ENCODE measurements at regions of chr10 and their contacts with region 1.

Region 1: DNA sequence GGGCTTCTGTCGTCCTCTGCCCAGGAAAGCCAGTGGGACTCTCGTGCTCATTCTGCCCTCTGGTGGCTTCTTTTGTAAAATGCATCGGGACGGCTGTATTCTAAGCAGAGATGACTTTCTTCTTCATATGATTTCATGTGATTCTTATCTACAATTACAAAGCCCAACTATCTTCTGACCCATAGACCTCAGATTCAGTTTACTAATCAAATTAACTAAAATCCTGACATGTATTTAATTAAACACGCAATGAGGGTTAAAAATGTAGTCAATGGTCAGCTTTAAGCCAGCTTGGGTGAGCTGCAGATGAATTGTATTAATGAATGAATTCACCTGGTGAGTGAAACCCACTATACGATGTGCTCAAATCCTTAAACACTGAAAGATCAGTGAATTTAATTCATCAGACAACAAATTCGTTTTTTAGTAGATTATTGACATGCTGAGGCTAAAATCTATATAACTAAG is 117.6 kb upstream of the FAM204A start:
- DNase-seq: peak; percentile 69
- ATAC-seq: peak; percentile 98
- H3K4me3 Mint-ChIP-seq: no peak overlapping the region
- H3K27ac Mint-ChIP-seq: no peak overlapping the region
- H3K4me1 Mint-ChIP-seq: 0 out of 2 replicates have a peak, but pooled peaks cover 2% of the 10 kb centered on the region
- H3K27me3 Mint-ChIP-seq: peaks cover 6% of the 10 kb centered on the region; the same call in 1 of the 2 replicates
- CTCF ChIP-seq: peak; percentile 50

Region 2: GRCh38 chr10:117496616-117497028 is 963.1 kb before region 1 on chr10:
- CTCF ChIA-PET with region 1: interaction called, 12 read pairs
- POLR2A ChIA-PET with region 1: no interaction called
- DNase-seq: peak; percentile 82
- ATAC-seq: peak; percentile 88
- H3K4me3 Mint-ChIP-seq: no peak overlapping the region
- H3K27ac Mint-ChIP-seq: no peak overlapping the region
- H3K4me1 Mint-ChIP-seq: peaks cover 2% of the 10 kb centered on the region; the same call in 1 of the 2 replicates
- H3K27me3 Mint-ChIP-seq: peaks cover 35% of the 10 kb centered on the region
- CTCF ChIP-seq: peak; percentile 88

Region 3: GRCh38 chr10:118259288-118259906 is 200.4 kb before region 1 on chr10:
- CTCF ChIA-PET with region 1: interaction called, 17 read pairs
- POLR2A ChIA-PET with region 1: no interaction called
- DNase-seq: peak; percentile 73
- ATAC-seq: peak; percentile 95
- H3K4me3 Mint-ChIP-seq: no peak overlapping the region
- H3K27ac Mint-ChIP-seq: no peak overlapping the region
- H3K4me1 Mint-ChIP-seq: peaks cover 18% of the 10 kb centered on the region
- H3K27me3 Mint-ChIP-seq: peaks cover 98% of the 10 kb centered on the region
- CTCF ChIP-seq: peak; percentile 90

Region 4: GRCh38 chr10:118447478-118448270 is 12.1 kb before region 1 on chr10:
- CTCF ChIA-PET with region 1: interaction called, 14 read pairs
- POLR2A ChIA-PET with region 1: no interaction called
- DNase-seq: no peak
- ATAC-seq: no peak
- H3K4me3 Mint-ChIP-seq: no peak overlapping the region
- H3K27ac Mint-ChIP-seq: no peak overlapping the region
- H3K4me1 Mint-ChIP-seq: peaks cover 4% of the 10 kb centered on the region; the same call in 1 of the 2 replicates
- H3K27me3 Mint-ChIP-seq: peaks cover 12% of the 10 kb centered on the region
- CTCF ChIP-seq: no peak

Region 5: GRCh38 chr10:118543714-118544400 is 84.1 kb after region 1 on chr10:
- CTCF ChIA-PET with region 1: interaction called, 23 read pairs
- POLR2A ChIA-PET with region 1: no interaction called
- DNase-seq: peak; percentile 81
- ATAC-seq: peak; percentile 99
- H3K4me3 Mint-ChIP-seq: no peak overlapping the region
- H3K27ac Mint-ChIP-seq: no peak overlapping the region
- H3K4me1 Mint-ChIP-seq: no peaks in the 10 kb centered on the region
- H3K27me3 Mint-ChIP-seq: no peaks in the 10 kb centered on the region; the same call in 1 of the 2 replicates
- CTCF ChIP-seq: peak; percentile 24; the same call in 1 of the 2 replicates

Measured in WTC11 (cell line).